ENCODE measurements at regions of chr19 and their contacts with region 1.

Region 1: DNA sequence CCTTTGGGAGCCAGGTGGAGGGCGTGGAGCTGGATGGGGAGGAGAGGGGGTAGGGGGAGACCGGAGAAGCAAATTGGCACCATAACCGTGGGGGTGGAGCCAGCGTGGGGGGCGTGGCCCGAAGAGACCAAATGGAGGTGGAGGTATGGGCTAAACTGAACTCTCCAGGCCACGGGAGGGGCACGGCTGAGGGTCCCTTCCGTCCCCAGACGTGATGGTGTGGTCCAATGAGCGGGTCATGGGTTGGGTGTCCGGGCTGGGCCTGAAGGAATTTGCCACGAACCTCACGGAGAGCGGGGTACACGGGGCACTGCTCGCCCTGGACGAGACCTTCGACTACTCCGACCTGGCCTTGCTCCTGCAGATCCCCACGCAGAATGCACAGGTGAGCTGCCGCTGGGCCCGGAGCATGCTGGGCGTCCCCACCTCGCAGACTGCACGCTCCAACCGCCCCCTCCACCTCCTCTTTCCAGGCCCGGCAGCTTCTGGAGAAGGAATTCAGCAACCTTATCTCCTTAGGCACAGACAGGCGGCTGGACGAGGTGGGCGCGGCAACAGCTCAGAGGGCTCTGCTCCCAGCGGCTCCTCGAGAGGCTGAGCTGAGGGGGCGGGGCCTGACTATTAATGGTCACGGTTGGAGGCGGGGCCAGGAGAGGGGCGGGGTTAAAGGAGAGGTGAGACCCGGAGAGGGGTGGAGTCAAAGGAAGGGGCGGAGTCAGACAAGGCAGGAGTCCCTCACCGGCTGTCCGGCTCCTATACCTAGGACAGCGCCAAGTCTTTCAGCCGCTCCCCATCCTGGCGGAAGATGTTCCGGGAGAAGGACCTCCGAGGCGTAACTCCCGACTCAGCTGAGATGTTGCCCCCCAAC is 6.2 kb downstream of the HRC start:
- DNase-seq: peak; percentile 86
- ATAC-seq: peak; percentile 66
- H3K4me3 ChIP-seq: peak overlapping the region; percentile 53 to 86 (median 63)
- H3K27ac ChIP-seq: peak overlapping the region; percentile 77
- H3K4me1 ChIP-seq: peaks cover 54% of the 10 kb centered on the region
- H3K27me3 ChIP-seq: no peaks in the 10 kb centered on the region; a peak in 2 of 5 replicates
- CTCF ChIP-seq: no peak
- EP300 ChIP-seq: no peak
- POLR2A ChIP-seq: peak in 1 of 2 experiments; percentile 10; a peak in 2 of 4 replicates
- RAD21 ChIP-seq: no peak

Region 2: GRCh38 chr19:49097455-49098288 is 51.3 kb before region 1 on chr19:
- CTCF ChIA-PET with region 1: interaction called, 11 read pairs
- POLR2A ChIA-PET with region 1: no interaction called
- in situ Hi-C with region 1: no loop called
- intact Hi-C with region 1: loop called (anchors 5 kb)
- DNase-seq: peak; percentile 55
- ATAC-seq: peak; percentile 73
- H3K4me3 ChIP-seq: no peak overlapping the region
- H3K27ac ChIP-seq: no peak overlapping the region
- H3K4me1 ChIP-seq: no peaks in the 10 kb centered on the region
- H3K27me3 ChIP-seq: no peaks in the 10 kb centered on the region
- CTCF ChIP-seq: peak; percentile 97
- EP300 ChIP-seq: no peak
- POLR2A ChIP-seq: no peak; a peak in 1 of 4 replicates
- RAD21 ChIP-seq: peak; percentile 74

Region 3: DNA sequence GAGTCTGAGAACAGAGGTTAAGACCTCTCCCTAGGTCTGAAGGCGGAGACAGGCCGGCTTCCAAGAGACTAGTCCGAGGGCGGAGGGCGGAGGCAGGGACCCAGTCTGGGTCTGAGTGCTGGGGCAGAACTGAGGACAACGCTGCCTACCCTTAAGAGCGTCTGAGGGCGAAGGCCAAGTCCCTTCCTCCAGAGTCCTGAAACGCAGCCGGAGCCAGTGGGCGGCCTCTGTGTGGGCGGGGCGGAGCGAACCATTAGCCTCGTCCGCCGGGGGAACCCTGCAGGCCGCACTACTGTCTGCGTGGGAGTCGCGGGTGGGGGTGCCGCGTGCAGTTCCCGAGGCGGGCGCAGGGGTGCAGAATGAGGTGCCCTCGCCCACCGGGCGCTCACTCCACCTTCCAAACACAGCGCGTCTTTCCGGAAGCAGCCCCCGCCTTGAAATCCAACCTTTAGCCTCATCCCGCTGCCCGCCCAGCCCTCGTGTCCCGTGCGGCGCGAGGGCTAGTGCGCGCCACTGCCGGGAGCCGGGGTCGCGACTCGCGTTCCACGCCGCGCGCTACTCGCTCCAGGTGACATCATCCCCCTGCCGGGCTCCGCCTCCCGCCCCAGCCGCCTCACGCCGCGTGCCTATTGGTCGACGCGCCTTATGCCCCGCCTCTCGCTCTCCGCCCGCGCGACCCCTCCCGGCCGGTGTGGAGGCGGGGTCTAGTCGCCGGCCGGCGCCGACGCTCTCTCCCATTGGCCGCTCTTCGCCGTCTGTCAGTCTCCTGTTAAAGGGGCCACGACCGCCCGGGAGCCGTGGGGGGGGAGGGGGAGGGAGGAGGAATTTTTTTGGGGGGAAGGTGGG is 30.2 kb before region 1 on chr19 and contains the start of gene C19orf73:
- CTCF ChIA-PET with region 1: no interaction called
- POLR2A ChIA-PET with region 1: interaction called, 14 read pairs
- in situ Hi-C with region 1: loop called (anchors 5 kb)
- intact Hi-C with region 1: loop called (anchors 1 kb)
- DNase-seq: peak; percentile 82
- ATAC-seq: peak; percentile 71
- H3K4me3 ChIP-seq: peak within 1 kb of the TSS; percentile 67 to 78 (median 74)
- H3K27ac ChIP-seq: peak within 1 kb of the TSS; percentile 77
- H3K4me1 ChIP-seq: peaks cover 54% of the 10 kb centered on the region
- H3K27me3 ChIP-seq: peaks cover 0 to 7% of the 10 kb centered on the region in 2 experiments; a peak in 1 of 5 replicates
- CTCF ChIP-seq: peak; percentile 40
- EP300 ChIP-seq: peak in 1 of 2 experiments; percentile 20; a peak in 2 of 4 replicates
- POLR2A ChIP-seq: peak; percentile 56 to 80
- RAD21 ChIP-seq: peak; percentile 77
- total RNA-seq, gene C19orf73: 0.80 and 1.4 TPM in 2 replicates

Region 4: DNA sequence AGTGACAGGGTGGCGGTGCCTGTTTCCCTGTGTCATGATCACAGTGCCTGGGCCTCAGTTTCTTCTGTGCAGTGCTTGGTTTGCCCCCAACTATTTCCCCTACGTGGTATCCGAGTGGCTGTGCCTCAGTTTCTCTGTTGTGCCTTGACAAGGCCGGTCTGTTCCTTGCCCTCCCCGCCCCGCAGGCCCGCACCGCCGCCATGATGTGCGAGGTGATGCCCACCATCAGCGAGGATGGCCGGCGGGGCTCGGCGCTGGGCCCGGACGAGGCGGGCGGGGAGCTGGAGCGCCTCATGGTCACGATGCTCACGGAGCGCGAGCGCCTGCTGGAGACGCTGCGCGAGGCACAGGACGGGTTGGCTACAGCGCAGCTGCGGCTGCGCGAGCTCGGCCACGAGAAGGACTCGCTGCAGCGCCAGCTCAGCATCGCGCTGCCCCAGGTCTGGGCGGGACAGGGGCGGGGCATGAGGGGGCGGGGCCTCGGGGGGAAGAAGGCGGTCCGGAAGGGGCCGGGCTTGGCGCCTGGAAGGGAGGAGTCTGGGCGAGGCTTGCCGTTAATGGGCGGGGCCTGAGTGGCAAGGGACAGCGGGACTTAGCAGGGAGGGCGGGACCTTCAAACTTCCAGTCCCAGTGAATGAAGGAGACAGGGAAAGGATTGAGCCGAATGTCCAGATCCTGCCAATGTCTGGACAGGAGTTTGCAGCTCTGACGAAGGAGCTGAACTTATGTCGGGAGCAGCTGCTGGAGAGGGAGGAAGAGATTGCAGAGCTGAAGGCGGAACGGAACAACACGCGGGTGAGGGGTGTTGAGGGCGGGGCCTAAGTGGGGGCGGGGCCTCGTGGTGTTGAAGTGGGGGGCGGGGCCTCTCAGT is 21.1 kb before region 1 on chr19:
- CTCF ChIA-PET with region 1: no interaction called
- POLR2A ChIA-PET with region 1: interaction called, 21 read pairs
- in situ Hi-C with region 1: no loop called
- intact Hi-C with region 1: no loop called
- DNase-seq: peak; percentile 93
- ATAC-seq: peak; percentile 92
- H3K4me3 ChIP-seq: peak overlapping the region; percentile 49 to 75 (median 58)
- H3K27ac ChIP-seq: peak overlapping the region; percentile 72
- H3K4me1 ChIP-seq: peaks cover 49% of the 10 kb centered on the region
- H3K27me3 ChIP-seq: no peaks in the 10 kb centered on the region
- CTCF ChIP-seq: peak; percentile 65
- EP300 ChIP-seq: 0 out of 4 replicates have a peak, but pooled peaks of 1 of the 2 experiments have one; percentile 4
- POLR2A ChIP-seq: peak; percentile 17 to 80; a peak in 3 of 4 replicates
- RAD21 ChIP-seq: peak; percentile 68

Region 5: GRCh38 chr19:49167857-49168409 is 18.9 kb after region 1 on chr19:
- CTCF ChIA-PET with region 1: no interaction called
- POLR2A ChIA-PET with region 1: no interaction called
- in situ Hi-C with region 1: no loop called
- intact Hi-C with region 1: no loop called
- DNase-seq: no peak
- ATAC-seq: no peak; the same call in 2 of the 3 replicates
- H3K4me3 ChIP-seq: no peak overlapping the region
- H3K27ac ChIP-seq: no peak overlapping the region
- H3K4me1 ChIP-seq: peaks cover 22% of the 10 kb centered on the region
- H3K27me3 ChIP-seq: no peaks in the 10 kb centered on the region
- CTCF ChIP-seq: no peak
- EP300 ChIP-seq: no peak
- POLR2A ChIP-seq: no peak
- RAD21 ChIP-seq: no peak

Region 6: DNA sequence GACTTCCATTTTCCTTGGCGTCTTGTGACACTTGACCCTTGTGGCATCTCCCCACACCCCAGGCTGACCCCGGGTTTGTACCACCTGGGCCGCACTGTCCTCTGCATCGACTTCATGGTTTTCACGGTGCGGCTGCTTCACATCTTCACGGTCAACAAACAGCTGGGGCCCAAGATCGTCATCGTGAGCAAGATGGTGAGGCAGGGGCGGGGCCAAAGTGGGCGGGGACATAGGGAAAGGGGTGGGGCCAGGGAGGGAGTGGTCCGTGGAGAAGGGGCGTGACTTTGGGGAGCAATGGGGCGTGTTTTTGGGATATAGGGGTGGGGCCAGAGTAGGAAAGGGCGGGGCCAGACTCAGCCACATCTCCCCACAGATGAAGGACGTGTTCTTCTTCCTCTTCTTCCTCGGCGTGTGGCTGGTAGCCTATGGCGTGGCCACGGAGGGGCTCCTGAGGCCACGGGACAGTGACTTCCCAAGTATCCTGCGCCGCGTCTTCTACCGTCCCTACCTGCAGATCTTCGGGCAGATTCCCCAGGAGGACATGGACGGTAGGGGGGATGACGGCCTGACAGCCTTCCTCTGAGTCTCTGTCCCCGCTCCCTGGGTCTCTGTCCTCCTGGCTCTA is 51.3 kb after region 1 on chr19:
- CTCF ChIA-PET with region 1: interaction called, 4 read pairs
- POLR2A ChIA-PET with region 1: interaction called, 7 read pairs
- in situ Hi-C with region 1: no loop called
- intact Hi-C with region 1: loop called (anchors 10 kb)
- DNase-seq: no peak
- ATAC-seq: no peak
- H3K4me3 ChIP-seq: no peak overlapping the region
- H3K27ac ChIP-seq: no peak overlapping the region
- H3K4me1 ChIP-seq: peaks cover 13% of the 10 kb centered on the region
- H3K27me3 ChIP-seq: no peaks in the 10 kb centered on the region; a peak in 1 of 5 replicates
- CTCF ChIP-seq: no peak
- EP300 ChIP-seq: no peak
- POLR2A ChIP-seq: no peak
- RAD21 ChIP-seq: no peak

Measured in HepG2 (cell line).